Activated CD8-positive, alpha-beta memory T cell treated with anti-CD3 and anti-CD28 coated beads, Interleukin-2, amount 10 ng/mL, durations not matched to agents 7 days and 5 days (primary cell): ENCODE measurements at regions of chr15 and their contacts with region 1.

Region 1: DNA sequence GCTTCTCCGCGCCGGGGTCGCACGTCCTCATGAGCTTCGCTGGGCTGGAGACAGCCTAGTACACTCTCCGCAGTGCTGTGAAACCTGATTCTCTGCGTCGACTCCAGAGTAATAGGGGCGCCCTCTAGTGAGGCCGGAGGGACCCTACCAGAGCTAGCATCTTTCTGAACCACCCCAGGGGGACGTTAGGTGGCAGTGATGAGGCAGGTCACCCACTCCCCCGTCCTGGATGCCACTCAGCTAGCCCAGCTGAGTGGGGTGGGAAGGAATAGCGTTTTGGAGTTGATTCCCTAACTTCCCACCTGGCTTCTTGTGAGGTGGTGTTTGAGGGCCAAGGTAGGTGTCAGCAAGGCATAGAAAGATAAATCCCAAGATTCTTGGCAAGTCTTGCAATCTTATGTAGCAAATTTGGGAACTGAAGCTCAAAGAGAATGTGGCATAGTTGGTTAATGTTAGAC is 4.0 kb downstream of the DUOXA2 start:
- DNase-seq: peak; percentile 89
- ATAC-seq: peak; percentile 99
- H3K4me3 Mint-ChIP-seq: no peak overlapping the region
- H3K27ac Mint-ChIP-seq: no peak overlapping the region
- H3K4me1 Mint-ChIP-seq: peaks cover 24% of the 10 kb centered on the region
- H3K27me3 Mint-ChIP-seq: peaks cover 66% of the 10 kb centered on the region

Region 2: DNA sequence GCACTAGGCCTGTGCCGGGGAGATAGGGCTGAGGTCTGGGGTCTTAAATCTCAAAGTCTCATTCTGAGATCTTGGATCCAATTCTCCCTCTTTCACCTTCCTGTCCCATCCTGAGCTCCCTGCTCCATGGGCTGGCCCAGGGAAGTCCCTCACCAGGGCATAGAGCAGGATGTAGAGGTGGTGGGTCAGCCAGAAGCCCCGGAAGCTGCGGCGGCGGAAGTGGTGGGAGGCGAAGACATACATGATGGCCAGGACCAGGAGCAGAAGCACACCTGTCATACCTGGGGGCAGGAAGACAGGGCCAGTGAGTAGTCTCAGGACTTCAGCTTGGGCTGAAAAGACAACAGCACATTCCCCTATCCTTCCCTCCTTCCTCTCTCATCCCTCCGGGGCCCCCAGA is 20.7 kb before region 1 on chr15:
- CTCF ChIA-PET with region 1: interaction called, 10 read pairs
- DNase-seq: no peak
- ATAC-seq: no peak
- H3K4me3 Mint-ChIP-seq: no peak overlapping the region
- H3K27ac Mint-ChIP-seq: no peak overlapping the region
- H3K4me1 Mint-ChIP-seq: no peaks in the 10 kb centered on the region
- H3K27me3 Mint-ChIP-seq: peaks cover 4% of the 10 kb centered on the region

Region 3: GRCh38 chr15:45106002-45106790 is 12.0 kb before region 1 on chr15:
- CTCF ChIA-PET with region 1: interaction called, 12 read pairs
- DNase-seq: no peak
- ATAC-seq: no peak
- H3K4me3 Mint-ChIP-seq: no peak overlapping the region
- H3K27ac Mint-ChIP-seq: no peak overlapping the region
- H3K4me1 Mint-ChIP-seq: no peaks in the 10 kb centered on the region
- H3K27me3 Mint-ChIP-seq: peaks cover 27% of the 10 kb centered on the region

Region 4: DNA sequence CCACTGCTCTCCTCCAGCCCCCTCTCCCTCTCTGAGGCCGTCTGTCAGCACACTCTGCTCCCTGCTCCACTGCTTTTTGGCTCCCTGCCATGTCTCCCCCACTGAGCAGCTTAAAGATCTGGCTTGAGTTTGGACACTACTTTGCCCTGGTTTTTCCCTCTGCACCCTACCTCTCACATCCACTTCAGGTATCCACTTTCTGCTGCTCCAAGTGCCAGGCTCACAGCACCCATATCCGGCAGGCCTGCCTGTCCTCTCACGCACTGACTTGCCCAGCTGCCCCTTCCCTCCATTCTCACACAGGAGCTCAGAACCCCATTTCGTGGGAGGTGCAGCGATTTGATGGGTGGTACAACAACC is 15.4 kb after region 1 on chr15:
- CTCF ChIA-PET with region 1: interaction called, 17 read pairs
- DNase-seq: no peak
- ATAC-seq: no peak
- H3K4me3 Mint-ChIP-seq: no peak overlapping the region
- H3K27ac Mint-ChIP-seq: no peak overlapping the region
- H3K4me1 Mint-ChIP-seq: peaks cover 7% of the 10 kb centered on the region
- H3K27me3 Mint-ChIP-seq: peaks cover 64% of the 10 kb centered on the region

Region 5: GRCh38 chr15:45179221-45179985 is 61.2 kb after region 1 on chr15:
- CTCF ChIA-PET with region 1: interaction called, 12 read pairs
- DNase-seq: peak; percentile 54
- ATAC-seq: no peak
- H3K4me3 Mint-ChIP-seq: no peak overlapping the region
- H3K27ac Mint-ChIP-seq: no peak overlapping the region
- H3K4me1 Mint-ChIP-seq: peaks cover 17% of the 10 kb centered on the region
- H3K27me3 Mint-ChIP-seq: no peaks in the 10 kb centered on the region

Region 6: GRCh38 chr15:45198337-45199135 is 80.4 kb after region 1 on chr15:
- CTCF ChIA-PET with region 1: interaction called, 10 read pairs
- DNase-seq: peak; percentile 97
- ATAC-seq: peak; percentile 74
- H3K4me3 Mint-ChIP-seq: no peak overlapping the region
- H3K27ac Mint-ChIP-seq: no peak overlapping the region
- H3K4me1 Mint-ChIP-seq: peaks cover 10% of the 10 kb centered on the region
- H3K27me3 Mint-ChIP-seq: peaks cover 5% of the 10 kb centered on the region